IMR-90 (cell line): ENCODE measurements at regions of chr10 and their contacts with region 1.

Region 1: DNA sequence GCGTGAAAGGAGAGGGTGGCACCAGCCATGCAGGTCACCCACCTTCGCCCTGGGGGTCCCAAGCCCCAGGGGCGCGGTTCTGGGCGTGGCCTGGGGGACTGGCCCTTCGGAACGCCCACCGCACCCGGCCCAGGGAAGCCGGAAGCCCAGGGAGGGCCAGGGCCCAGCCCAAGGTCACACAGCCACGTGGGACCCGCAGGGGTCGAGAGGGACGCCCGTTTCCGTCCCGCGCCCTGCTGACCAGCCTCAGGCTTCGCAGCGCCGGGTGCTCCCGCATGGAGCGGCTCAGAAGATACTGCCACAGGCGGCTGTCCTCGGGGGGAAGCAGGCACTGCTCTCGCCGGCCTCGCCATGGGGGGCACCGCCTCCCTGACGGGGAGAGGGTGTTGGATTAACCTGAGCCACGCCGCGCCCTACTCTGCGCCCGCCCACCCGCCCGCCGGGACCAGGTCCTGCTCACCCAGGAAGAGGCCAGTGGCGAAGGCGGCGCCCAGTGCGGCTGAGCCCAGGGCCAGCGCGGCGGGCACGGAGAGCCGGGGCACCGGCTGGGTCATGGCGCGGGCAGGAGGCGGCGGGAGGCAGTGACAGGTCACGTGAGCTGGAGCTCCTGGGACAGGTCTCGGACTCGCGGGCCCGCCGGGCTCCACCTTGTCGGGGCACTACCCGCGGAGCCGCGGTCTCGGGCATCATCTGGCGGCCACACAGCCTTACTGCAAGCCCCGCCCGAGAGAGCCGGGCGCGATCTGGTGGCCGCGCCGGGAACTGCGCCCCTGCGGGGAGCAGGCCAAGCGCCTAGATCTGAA is at the start of gene COMTD1:
- DNase-seq: peak; percentile 82
- ATAC-seq: peak; percentile 88
- H3K4me3 ChIP-seq: peak within 1 kb of the TSS; percentile 57
- H3K27ac ChIP-seq: peak within 1 kb of the TSS; percentile 17
- H3K4me1 ChIP-seq: peaks cover 10% of the 10 kb centered on the region
- H3K27me3 ChIP-seq: no peaks in the 10 kb centered on the region
- CTCF ChIP-seq: peak; percentile 100; the same call in 1 of the 2 replicates
- POLR2A ChIP-seq: 0 out of 2 replicates have a peak, but pooled peaks have one; percentile 57
- RAD21 ChIP-seq: peak; percentile 99
- total RNA-seq, gene COMTD1: 1.4 and 1.6 TPM in 2 replicates

Region 2: DNA sequence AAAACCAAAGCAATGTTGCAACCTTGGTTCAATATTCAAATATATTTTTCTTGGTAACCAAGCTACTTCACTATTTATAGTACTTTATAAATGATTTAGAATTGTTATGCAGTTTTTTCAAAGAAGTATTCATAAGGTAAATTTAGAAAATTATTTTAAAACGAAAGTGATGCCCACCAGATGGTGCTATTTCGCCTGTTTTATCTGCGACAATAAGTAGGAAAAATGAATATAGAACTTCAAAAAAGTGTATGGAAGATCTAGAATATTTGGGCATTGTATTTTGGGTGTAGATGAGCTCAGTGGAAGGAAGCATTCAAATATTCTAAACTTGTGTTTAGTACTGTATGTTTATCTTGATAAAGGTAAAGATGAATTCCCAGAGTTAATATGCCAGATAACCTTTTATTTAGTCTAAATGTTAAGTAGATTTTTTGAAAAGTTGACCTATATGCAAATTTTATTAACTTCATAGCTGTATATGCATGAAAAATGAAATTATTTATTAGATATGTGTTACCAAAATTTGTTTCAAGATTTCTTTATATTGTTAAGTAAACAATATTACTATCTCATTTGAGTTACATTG is 991.4 kb before region 1 on chr10:
- CTCF ChIA-PET with region 1: interaction called, 4 read pairs
- POLR2A ChIA-PET with region 1: no interaction called
- dilution Hi-C with region 1: no loop called
- in situ Hi-C with region 1: loop called (anchors 10 kb)
- intact Hi-C with region 1: loop called (anchors 5 kb)
- DNase-seq: peak; percentile 73
- ATAC-seq: no peak; the same call in 1 of the 2 replicates
- H3K4me3 ChIP-seq: no peak overlapping the region
- H3K27ac ChIP-seq: no peak overlapping the region
- H3K4me1 ChIP-seq: no peaks in the 10 kb centered on the region
- H3K27me3 ChIP-seq: no peaks in the 10 kb centered on the region
- CTCF ChIP-seq: peak; percentile 63
- POLR2A ChIP-seq: no peak
- RAD21 ChIP-seq: peak; percentile 63

Region 3: DNA sequence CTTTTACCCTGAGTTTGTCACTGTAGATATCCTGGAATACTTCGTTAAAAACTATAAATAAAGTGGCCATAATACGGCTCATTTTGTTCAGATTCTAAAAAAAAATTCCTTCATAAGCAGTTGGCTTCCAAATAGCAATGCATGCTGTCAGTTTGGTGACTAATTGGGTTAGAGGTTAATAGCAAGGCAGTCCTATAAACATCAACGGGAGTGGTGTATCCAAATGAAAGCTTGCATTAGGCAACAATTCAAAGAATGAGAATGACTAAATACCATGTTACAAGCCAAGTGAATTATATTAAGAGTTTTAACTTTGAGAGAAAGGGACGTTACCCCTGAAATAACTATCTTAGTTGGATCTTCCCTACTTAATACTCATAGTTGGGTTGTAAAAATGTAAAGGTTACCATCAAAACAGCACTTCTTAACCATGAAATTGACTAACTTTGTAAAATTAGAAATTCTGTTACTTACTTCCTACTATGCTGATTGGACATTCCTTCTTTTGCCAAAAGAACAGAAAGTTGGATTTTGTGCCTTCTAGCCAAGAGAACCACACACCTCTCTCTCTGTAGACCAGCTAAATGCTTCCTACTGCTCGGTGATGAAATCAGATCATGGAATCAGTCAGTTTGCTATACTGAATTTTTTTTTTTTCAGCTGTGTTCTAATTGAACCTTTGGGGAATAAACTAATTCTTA is 311.2 kb before region 1 on chr10:
- CTCF ChIA-PET with region 1: no interaction called
- POLR2A ChIA-PET with region 1: no interaction called
- dilution Hi-C with region 1: no loop called
- in situ Hi-C with region 1: no loop called
- intact Hi-C with region 1: loop called (anchors 10 kb)
- DNase-seq: peak; percentile 97
- ATAC-seq: peak; percentile 76
- H3K4me3 ChIP-seq: peak overlapping the region; percentile 20; the same call in 1 of the 2 replicates
- H3K27ac ChIP-seq: peak overlapping the region; percentile 94
- H3K4me1 ChIP-seq: peaks cover 27% of the 10 kb centered on the region
- H3K27me3 ChIP-seq: no peaks in the 10 kb centered on the region
- CTCF ChIP-seq: no peak
- POLR2A ChIP-seq: no peak
- RAD21 ChIP-seq: no peak

Region 4: GRCh38 chr10:75029857-75030256 is 205.7 kb before region 1 on chr10:
- CTCF ChIA-PET with region 1: interaction called, 3 read pairs
- POLR2A ChIA-PET with region 1: no interaction called
- dilution Hi-C with region 1: no loop called
- in situ Hi-C with region 1: loop called (anchors 10 kb)
- intact Hi-C with region 1: no loop called
- DNase-seq: peak; percentile 78
- ATAC-seq: peak; percentile 88
- H3K4me3 ChIP-seq: no peak overlapping the region
- H3K27ac ChIP-seq: peak overlapping the region; percentile 7; the same call in 1 of the 2 replicates
- H3K4me1 ChIP-seq: peaks cover 3% of the 10 kb centered on the region; the same call in 1 of the 2 replicates
- H3K27me3 ChIP-seq: no peaks in the 10 kb centered on the region
- CTCF ChIP-seq: no peak
- POLR2A ChIP-seq: no peak
- RAD21 ChIP-seq: no peak

Region 5: GRCh38 chr10:75187961-75188426 is 47.6 kb before region 1 on chr10:
- CTCF ChIA-PET with region 1: interaction called, 7 read pairs
- POLR2A ChIA-PET with region 1: interaction called, 4 read pairs
- dilution Hi-C with region 1: no loop called
- in situ Hi-C with region 1: no loop called
- intact Hi-C with region 1: loop called (anchors 1 kb)
- DNase-seq: peak; percentile 74
- ATAC-seq: no peak
- H3K4me3 ChIP-seq: no peak overlapping the region
- H3K27ac ChIP-seq: no peak overlapping the region
- H3K4me1 ChIP-seq: peaks cover 16% of the 10 kb centered on the region
- H3K27me3 ChIP-seq: no peaks in the 10 kb centered on the region
- CTCF ChIP-seq: peak; percentile 83
- POLR2A ChIP-seq: no peak
- RAD21 ChIP-seq: peak; percentile 89

Region 6: DNA sequence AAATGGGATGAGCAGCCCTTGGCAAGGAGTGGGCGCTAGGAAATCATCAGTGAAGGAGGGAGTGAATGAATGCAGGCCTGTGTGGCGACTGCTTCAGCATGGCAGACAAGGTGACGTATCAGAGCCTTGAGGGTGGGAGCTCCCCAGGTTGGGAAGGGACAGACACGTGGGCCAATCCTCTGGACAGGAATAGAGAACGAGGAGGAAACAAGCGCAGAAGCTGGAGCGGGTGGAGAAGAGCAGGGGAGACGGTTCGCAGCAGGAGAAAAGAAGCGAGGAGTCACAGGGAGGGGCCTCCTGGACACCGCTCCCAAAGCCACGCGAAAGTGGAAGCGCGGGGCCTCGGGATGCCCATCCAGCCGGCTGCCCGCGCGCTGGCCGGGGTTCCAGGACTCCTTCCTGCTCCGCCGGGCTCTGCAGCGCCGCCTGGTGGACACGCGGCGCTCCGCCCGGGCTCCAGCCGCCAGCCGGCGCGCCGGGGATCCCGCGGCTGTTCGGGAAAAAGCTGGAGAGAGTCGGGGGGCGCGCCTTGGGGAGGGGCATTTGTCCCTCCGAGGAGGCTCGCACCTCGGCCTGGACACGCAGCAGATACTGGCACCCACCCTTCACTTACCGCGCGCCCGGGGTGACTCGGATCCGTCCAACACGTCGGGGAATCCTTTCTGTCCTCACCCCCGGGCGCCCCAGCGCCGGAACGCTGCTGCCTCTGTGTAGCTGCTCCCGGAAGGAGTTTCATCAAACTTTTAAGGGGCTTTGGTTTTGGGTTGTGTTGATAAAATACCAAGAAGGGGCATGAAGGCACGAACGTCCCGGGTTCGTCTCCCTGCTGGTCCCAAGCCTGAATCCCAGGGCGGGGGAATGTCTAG is 159.7 kb after region 1 on chr10:
- CTCF ChIA-PET with region 1: no interaction called
- POLR2A ChIA-PET with region 1: no interaction called
- dilution Hi-C with region 1: no loop called
- in situ Hi-C with region 1: no loop called
- intact Hi-C with region 1: loop called (anchors 2 kb)
- DNase-seq: peak; percentile 48
- ATAC-seq: peak; percentile 51
- H3K4me3 ChIP-seq: peak overlapping the region; percentile 99
- H3K27ac ChIP-seq: peak overlapping the region; percentile 98
- H3K4me1 ChIP-seq: peaks cover 13% of the 10 kb centered on the region; the same call in 1 of the 2 replicates
- H3K27me3 ChIP-seq: no peaks in the 10 kb centered on the region
- CTCF ChIP-seq: peak; percentile 80
- POLR2A ChIP-seq: no peak
- RAD21 ChIP-seq: peak; percentile 68